ENCODE measurements at regions of chr1 and their contacts with region 1.

Region 1: GRCh38 chr1:9721606-9722377 is 70.3 kb downstream of the PIK3CD start:
- DNase-seq: peak; percentile 84
- ATAC-seq: peak; percentile 21
- H3K4me3 Mint-ChIP-seq: peak overlapping the region; percentile 68
- H3K27ac Mint-ChIP-seq: peak overlapping the region; percentile 81
- H3K4me1 Mint-ChIP-seq: peaks cover 53% of the 10 kb centered on the region
- H3K27me3 Mint-ChIP-seq: no peaks in the 10 kb centered on the region

Region 2: GRCh38 chr1:9376886-9377333 is 344.9 kb before region 1 on chr1:
- POLR2A ChIA-PET with region 1: no interaction called
- DNase-seq: no peak
- ATAC-seq: no peak
- H3K4me3 Mint-ChIP-seq: no peak overlapping the region
- H3K27ac Mint-ChIP-seq: no peak overlapping the region
- H3K4me1 Mint-ChIP-seq: no peaks in the 10 kb centered on the region
- H3K27me3 Mint-ChIP-seq: peaks cover 4% of the 10 kb centered on the region

Region 3: GRCh38 chr1:9651565-9652378 is 70.0 kb before region 1 on chr1 and contains the start of gene PIK3CD:
- POLR2A ChIA-PET with region 1: interaction called, 130 read pairs
- DNase-seq: peak; percentile 74
- ATAC-seq: peak; percentile 41
- H3K4me3 Mint-ChIP-seq: peak within 1 kb of the TSS; percentile 97
- H3K27ac Mint-ChIP-seq: peak within 1 kb of the TSS; percentile 97
- H3K4me1 Mint-ChIP-seq: peaks cover 40% of the 10 kb centered on the region
- H3K27me3 Mint-ChIP-seq: no peaks in the 10 kb centered on the region
- total RNA-seq, gene PIK3CD: 250 TPM

Region 4: DNA sequence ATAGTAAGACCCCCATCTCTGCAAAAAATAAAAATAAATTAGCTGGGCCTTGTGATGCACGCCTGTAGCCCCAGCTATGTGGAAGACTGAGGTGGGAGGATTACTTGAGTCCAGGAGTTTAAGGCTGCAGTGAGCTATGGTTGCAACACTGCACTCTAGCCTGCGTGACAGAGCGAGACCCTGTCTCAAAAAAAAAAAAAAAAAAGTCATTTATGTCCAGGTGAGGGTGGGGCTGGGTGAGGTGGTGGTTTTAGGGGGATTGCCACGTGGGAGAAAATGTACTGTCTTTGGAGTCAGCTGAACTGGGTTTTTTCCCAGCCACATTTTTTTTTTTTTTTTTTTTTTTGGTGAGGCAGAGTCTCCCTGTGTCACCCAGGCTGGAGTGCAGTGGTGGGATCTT is 63.6 kb before region 1 on chr1:
- POLR2A ChIA-PET with region 1: interaction called, 130 read pairs
- DNase-seq: no peak
- ATAC-seq: peak; percentile 5
- H3K4me3 Mint-ChIP-seq: peak overlapping the region; percentile 97
- H3K27ac Mint-ChIP-seq: peak overlapping the region; percentile 87
- H3K4me1 Mint-ChIP-seq: peaks cover 74% of the 10 kb centered on the region
- H3K27me3 Mint-ChIP-seq: no peaks in the 10 kb centered on the region

Region 5: GRCh38 chr1:9671377-9672140 is 50.2 kb before region 1 on chr1:
- POLR2A ChIA-PET with region 1: no interaction called
- DNase-seq: no peak
- ATAC-seq: peak; percentile 19
- H3K4me3 Mint-ChIP-seq: no peak overlapping the region
- H3K27ac Mint-ChIP-seq: no peak overlapping the region
- H3K4me1 Mint-ChIP-seq: peaks cover 51% of the 10 kb centered on the region
- H3K27me3 Mint-ChIP-seq: no peaks in the 10 kb centered on the region

Region 6: DNA sequence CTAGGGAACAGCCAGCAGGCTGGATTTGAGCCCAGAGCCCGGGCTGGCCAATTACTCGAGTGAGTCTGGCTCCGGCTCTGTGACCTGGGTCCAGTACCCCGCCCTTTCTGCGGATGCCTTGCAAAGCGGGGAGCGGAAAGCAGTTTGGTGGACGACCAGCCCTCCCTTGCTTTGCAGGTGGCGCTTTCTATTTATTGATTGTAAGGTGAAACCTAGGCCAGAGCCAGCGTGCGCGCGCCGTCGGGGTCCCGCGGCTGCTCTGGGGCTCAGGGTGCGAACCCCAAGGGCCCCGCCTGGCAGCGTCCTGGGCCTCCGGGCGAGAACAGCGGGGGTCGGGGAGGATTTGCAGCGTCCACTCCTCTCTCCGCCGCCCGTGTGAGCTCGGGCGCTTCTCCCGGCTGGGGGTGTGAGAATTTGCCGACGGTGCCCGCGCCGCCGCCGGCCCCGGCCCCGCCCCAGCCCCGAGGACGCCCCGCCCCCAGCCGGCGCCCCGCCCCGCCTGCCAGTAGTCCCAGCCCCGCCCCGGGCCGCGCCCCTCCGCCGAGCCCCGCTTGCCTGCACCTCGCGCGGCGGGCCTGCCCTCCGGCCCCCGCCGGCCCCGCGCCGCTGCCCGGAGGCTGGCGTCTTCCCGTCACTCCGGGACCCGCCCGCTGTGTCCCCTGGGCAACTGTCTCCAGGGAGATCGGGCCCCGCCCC is 32.6 kb before region 1 on chr1:
- POLR2A ChIA-PET with region 1: interaction called, 122 read pairs
- DNase-seq: peak; percentile 94
- ATAC-seq: peak; percentile 74
- H3K4me3 Mint-ChIP-seq: peak overlapping the region; percentile 82
- H3K27ac Mint-ChIP-seq: peak overlapping the region; percentile 80
- H3K4me1 Mint-ChIP-seq: peaks cover 60% of the 10 kb centered on the region
- H3K27me3 Mint-ChIP-seq: no peaks in the 10 kb centered on the region

Region 7: DNA sequence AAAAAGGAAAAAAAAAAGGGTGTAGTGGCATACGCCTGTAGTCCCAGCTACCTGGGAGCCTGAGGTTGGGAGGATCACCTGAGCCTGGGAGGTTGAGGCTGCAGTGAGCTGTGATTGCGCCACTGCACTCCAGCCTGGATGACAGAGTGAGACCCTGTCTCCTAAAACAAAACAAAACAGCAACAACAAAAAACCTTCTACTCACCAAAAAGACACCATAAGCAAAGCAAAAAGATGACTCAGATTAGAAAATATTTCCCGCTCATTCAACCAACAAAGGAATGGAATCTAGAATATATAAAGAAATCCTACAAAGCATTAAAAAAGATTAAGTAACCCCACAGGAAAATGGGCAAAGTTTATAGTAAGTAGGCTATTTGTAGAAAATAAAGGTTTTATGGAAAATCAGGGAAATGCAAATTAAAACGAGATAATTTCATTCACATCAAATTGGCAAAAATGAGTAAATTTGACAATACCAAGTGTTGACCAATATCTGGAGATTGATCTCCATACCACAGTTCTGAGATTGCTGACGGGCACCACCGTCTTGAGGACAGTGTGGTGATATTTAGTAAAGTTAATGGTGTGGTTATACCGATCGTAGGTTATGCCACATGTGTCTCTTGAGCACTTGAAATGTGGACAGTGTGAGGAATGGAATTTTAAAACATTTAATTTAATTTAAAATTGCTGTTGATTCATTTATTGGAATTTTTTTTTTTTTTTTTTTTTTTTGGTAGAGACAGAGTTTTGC is 16.3 kb before region 1 on chr1:
- POLR2A ChIA-PET with region 1: interaction called, 28 read pairs
- DNase-seq: no peak
- ATAC-seq: no peak
- H3K4me3 Mint-ChIP-seq: peak overlapping the region; percentile 6
- H3K27ac Mint-ChIP-seq: peak overlapping the region; percentile 70
- H3K4me1 Mint-ChIP-seq: peaks cover 58% of the 10 kb centered on the region
- H3K27me3 Mint-ChIP-seq: no peaks in the 10 kb centered on the region

Region 8: GRCh38 chr1:9746211-9746610 is 24.4 kb after region 1 on chr1:
- POLR2A ChIA-PET with region 1: no interaction called
- DNase-seq: no peak
- ATAC-seq: no peak
- H3K4me3 Mint-ChIP-seq: no peak overlapping the region
- H3K27ac Mint-ChIP-seq: no peak overlapping the region
- H3K4me1 Mint-ChIP-seq: peaks cover 1% of the 10 kb centered on the region
- H3K27me3 Mint-ChIP-seq: no peaks in the 10 kb centered on the region